ENCODE measurements at regions of chr6 and their contacts with region 1.

Region 1: GRCh38 chr6:24694198-24694597 is 24.8 kb downstream of the C6orf62 start:
- DNase-seq: no peak
- H3K4me3 ChIP-seq: no peak overlapping the region
- H3K27ac ChIP-seq: no peak overlapping the region
- H3K4me1 ChIP-seq: no peaks in the 10 kb centered on the region
- H3K27me3 ChIP-seq: no peaks in the 10 kb centered on the region
- CTCF ChIP-seq: no peak
- POLR2A ChIP-seq: no peak

Region 2: DNA sequence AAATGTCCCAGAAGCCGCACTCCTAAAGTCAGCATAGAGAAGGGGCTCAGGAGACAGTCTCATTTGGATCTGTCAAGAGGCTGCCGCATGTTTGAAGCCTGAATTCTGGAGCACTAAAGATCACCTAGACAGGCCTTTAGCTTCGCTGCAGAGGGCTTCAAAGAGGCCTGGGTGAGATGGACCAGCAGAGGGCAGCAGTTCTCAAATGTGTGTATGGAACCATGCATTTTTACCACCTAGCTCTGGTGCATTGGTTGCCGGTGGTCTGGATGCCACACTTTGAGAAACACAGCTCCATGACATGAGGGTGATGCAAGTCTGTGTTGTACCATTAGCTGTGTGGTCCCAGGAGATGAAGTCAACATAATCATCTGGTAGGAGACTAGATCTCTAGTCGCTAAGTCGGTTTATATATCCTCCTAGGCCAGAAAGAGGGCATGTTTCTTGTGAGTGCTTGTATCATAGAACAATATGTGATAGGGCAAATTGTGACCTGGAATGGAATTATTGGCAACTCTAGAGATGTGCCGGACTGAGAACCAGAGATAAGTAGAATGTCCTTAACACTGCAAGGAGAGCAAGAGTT is 113.0 kb before region 1 on chr6:
- intact Hi-C with region 1: loop called (anchors 2 kb)
- DNase-seq: no peak
- H3K4me3 ChIP-seq: no peak overlapping the region
- H3K27ac ChIP-seq: no peak overlapping the region
- H3K4me1 ChIP-seq: no peaks in the 10 kb centered on the region
- H3K27me3 ChIP-seq: no peaks in the 10 kb centered on the region
- CTCF ChIP-seq: peak; percentile 59 to 69 (median 62)
- POLR2A ChIP-seq: no peak

Measured in vagina (tissue), 2 donors.